Activated CD4-positive, alpha-beta T cell treated with anti-CD3 and anti-CD28 coated beads, Interleukin-2, amount 10 ng/mL, durations not matched to agents 24 days and 14 days (primary cell): ENCODE measurements at regions of chr1 and their contacts with region 1.

Region 1: DNA sequence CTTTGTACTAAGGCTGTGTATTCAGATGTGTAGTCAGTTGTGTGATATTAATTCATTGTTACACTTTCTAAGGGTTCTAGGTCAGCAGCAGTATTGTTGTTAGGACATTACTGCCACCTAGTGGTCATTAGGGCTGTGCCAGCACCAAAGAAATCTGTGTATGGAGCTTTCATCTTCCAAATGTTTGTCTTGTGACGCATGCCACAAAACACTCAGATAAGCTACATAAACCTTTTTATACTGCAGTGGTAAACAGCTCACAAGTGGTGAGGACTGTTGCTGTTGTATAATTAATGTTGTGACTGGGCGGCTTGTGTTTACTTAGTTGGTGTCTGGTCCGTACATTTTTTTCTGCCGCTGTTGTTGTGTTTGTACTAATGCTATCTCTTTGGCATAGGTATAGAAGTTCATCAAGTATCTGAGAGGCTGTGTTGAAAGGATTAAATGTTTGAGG is 51.7 kb downstream of the S1PR1 start:
- DNase-seq: peak; percentile 89
- H3K4me3 Mint-ChIP-seq: no peak overlapping the region
- H3K27ac Mint-ChIP-seq: no peak overlapping the region
- H3K4me1 Mint-ChIP-seq: peaks cover 72% of the 10 kb centered on the region
- H3K27me3 Mint-ChIP-seq: peaks cover under 1% of the 10 kb centered on the region

Region 2: DNA sequence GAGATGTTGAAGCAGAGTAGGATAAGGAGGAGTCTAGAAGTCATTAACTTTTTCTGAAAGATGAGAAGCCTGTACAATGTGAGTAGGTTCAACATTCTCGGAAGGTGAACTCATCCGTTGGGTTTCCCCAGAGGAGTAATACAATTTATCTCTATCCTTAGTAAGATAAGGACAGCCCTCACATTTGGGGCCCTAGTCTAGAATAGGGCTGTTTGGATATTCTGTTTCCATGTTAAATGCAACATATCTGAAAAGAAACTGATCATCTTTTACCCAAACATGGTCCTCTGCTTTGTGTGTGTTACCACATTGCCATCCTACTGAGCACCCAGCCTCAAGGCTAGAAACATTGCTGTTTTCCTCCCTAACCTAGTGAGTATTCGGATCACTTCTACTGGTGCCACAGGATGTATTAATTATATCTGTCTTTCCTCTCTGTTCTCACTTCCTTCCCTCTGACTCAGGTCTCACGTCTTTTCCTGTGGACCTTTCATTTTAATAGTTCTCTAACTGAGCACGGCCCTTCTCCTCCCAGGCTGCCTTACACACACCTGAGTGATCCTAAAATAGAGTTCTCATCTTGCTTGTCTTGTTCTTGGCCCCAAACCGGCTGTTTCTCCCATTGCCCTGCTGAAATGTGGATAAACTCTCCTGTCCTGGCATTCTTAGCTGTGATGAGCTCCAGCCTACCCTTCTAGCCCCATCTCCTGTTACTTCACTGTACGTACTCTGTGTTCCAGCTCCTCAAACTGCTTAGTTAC is 844.5 kb before region 1 on chr1:
- intact Hi-C with region 1: loop called (anchors 2 kb)
- DNase-seq: peak; percentile 82
- H3K4me3 Mint-ChIP-seq: peak overlapping the region; percentile 86
- H3K27ac Mint-ChIP-seq: peak overlapping the region; percentile 96
- H3K4me1 Mint-ChIP-seq: peaks cover 72% of the 10 kb centered on the region
- H3K27me3 Mint-ChIP-seq: no peaks in the 10 kb centered on the region

Region 3: DNA sequence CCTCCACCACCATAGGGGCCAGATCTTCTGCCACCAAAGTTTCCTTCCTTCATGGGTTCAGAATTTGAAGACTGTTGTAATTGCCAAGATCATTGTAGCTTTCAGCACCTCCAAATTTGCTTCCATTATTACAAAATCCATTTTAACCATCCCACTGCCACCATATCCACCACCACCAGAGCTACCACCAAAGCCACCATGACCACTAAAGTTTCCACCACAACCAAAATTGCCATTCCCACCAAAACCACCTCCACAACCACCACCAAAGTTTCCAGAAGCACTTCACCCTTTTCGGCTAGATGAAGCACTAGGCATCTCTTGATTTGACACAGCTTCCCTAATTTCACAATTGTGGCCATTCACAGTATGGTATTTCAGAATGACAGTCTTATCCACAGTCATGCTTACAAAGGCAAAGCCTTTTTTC is 347.4 kb before region 1 on chr1:
- intact Hi-C with region 1: loop called (anchors 1 kb)
- DNase-seq: peak; percentile 71
- H3K4me3 Mint-ChIP-seq: peak overlapping the region; percentile 67
- H3K27ac Mint-ChIP-seq: peak overlapping the region; percentile 98
- H3K4me1 Mint-ChIP-seq: peaks cover 36% of the 10 kb centered on the region
- H3K27me3 Mint-ChIP-seq: peaks cover 2% of the 10 kb centered on the region

Region 4: GRCh38 chr1:101081496-101082488 is 206.7 kb before region 1 on chr1:
- intact Hi-C with region 1: loop called (anchors 5 kb)
- DNase-seq: peak; percentile 88
- H3K4me3 Mint-ChIP-seq: peak overlapping the region; percentile 44
- H3K27ac Mint-ChIP-seq: peak overlapping the region; percentile 76
- H3K4me1 Mint-ChIP-seq: peaks cover 38% of the 10 kb centered on the region
- H3K27me3 Mint-ChIP-seq: no peaks in the 10 kb centered on the region

Region 5: DNA sequence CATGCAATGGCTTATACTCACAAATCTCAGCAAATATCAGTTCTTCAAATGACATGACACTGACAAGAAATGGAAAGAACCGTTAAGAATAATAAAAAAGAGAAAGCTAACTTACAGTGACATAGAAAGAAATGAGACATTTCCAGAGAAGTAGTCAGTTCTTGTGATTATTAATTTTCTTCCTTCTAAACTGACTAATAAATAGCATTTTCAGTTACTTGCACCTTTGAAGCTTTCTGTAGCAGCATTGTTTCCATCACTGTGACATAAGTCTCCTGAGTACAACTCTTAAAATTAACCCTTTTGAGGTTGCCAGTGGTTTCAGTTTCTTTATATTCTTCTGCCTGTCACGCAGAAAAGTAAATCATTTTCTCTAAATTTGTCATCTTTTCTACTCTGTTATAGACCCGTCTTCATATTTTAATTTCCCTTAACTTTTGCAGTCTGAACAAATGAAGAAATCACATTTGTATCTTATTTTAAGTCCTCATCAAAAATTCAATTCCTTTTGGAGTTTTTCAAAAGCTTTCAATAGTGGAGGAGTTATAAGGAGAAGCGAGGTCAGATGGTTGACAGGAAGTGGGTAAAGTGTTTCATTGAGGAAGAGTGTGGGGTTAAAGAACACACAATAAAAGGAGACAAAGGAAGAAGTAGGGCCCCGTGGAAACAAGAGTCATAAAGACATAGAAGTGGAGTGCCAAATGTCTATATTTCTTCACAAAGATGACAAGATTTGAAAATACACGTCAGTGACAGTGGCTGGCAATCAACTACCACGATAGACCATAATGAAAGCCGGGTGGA is 109.6 kb before region 1 on chr1:
- intact Hi-C with region 1: loop called (anchors 1 kb)
- DNase-seq: peak; percentile 82
- H3K4me3 Mint-ChIP-seq: peak overlapping the region; percentile 77
- H3K27ac Mint-ChIP-seq: peak overlapping the region; percentile 98
- H3K4me1 Mint-ChIP-seq: peaks cover 59% of the 10 kb centered on the region
- H3K27me3 Mint-ChIP-seq: no peaks in the 10 kb centered on the region

Region 6: DNA sequence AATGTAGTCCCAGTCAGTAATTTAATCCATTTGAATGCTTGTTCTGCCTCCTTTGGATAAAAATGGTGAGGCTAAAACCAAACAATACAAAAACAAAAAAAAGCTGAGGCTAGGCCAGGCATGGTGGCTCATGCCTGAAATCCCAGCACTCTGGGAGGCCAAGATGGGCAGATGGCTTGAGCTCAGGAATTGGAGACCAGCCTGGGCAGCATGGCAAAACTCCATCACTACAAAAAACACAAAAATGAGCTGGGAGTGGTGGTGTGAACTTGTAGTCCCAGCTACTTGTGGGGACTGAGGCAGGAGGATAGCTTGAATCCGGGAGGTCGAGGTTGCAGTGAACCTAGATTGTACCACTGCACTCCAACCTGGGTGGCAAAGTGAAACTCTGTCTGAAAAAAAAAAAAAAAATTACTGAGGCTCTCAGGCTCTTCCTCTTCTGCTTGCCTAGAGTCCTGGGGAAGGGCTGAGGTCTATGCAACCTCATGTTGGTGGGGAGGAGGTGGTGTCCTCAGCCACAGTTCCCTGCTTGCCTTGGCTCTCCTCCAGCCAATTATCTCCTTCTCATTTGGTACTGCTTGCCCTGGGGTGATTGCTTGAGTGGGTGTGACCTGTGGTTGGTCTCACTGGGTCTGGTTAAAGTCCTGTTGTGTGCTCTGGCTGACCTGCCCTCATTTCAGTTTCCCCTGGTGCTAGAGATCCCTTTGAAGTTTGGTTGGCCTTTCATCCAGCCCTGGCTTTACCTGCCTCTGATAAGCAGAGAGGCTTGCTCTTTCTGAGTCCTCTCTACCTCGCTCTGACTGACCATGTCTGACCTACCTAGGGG is 30.8 kb before region 1 on chr1:
- intact Hi-C with region 1: loop called (anchors 1 kb)
- DNase-seq: peak; percentile 80
- H3K4me3 Mint-ChIP-seq: peak overlapping the region; percentile 42
- H3K27ac Mint-ChIP-seq: peak overlapping the region; percentile 68
- H3K4me1 Mint-ChIP-seq: peaks cover 52% of the 10 kb centered on the region
- H3K27me3 Mint-ChIP-seq: no peaks in the 10 kb centered on the region

Region 7: DNA sequence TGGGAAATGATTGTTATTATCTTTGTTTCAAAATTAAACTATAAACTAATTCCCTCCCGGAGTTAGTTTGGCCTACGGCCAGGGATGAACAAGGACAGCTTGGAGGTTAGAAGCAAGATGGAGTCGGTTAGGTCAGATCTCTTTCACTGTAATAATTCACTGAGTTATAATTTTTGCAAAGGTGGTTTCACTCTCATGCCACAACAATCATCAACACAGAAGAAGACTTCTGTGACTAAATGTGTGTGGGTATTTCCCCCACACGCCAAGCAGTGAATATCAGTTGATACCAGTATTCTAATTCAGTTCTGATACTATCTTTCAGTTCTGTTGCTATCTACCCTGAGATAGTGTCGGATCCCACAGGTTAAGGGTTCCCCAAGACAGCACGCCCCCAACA is 163.4 kb after region 1 on chr1:
- intact Hi-C with region 1: loop called (anchors 5 kb)
- DNase-seq: peak; percentile 55
- H3K4me3 Mint-ChIP-seq: no peak overlapping the region
- H3K27ac Mint-ChIP-seq: peak overlapping the region; percentile 23
- H3K4me1 Mint-ChIP-seq: peaks cover 29% of the 10 kb centered on the region
- H3K27me3 Mint-ChIP-seq: peaks cover 19% of the 10 kb centered on the region